Dorsolateral prefrontal cortex (tissue), 120 donors: ENCODE measurements at regions of chr2 and their contacts with region 1.

Region 1: GRCh38 chr2:201118121-201118960 is 2.4 kb downstream of the CFLAR start:
- DNase-seq: peak; percentile 68 to 85 (median 80)
- H3K4me3 ChIP-seq: peak overlapping the region; percentile 42 to 95 (median 84)
- H3K27ac ChIP-seq: peak overlapping the region; percentile 57 to 100 (median 98)
- H3K27me3 ChIP-seq: peaks cover 0 to 4% (median 0%) of the 10 kb centered on the region in 45 donors
- CTCF ChIP-seq: peak in 53 of 56 donors; percentile 24 to 73 (median 52)

Region 2: DNA sequence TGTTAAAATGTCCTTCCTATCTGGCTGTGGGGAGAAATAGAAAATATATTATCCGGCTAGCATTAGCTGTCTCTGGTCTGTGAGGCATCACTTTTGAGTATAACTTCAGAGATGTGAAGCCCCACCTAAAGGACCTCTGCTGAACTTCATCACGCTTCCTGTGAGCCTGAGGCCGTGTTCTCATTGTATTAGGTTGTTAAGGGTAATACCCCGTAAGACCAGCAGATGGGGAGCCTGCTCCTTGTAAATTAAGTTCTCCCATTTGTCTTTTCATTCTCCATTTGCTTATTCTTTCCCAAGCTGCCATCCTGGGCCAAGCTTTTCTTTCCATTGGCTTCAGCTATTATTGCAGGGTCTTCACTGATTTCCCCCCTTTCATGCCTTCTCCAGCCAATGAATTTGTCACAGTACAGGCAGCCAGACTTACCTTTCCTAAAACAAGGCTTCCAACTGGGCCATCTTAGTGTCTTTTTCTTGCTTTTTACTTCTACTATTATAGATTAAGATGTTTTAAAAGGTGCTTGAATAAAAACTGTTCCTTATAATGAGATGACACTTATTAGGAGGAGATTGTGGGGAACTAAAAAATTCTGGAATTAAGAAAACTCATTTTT is 216.8 kb before region 1 on chr2:
- intact Hi-C with region 1: loop called in 1 of 2 experiments (anchors 5 kb)
- DNase-seq: peak in 4 of 10 donors; percentile 9 to 67 (median 26)
- H3K4me3 ChIP-seq: peak overlapping the region in 1 of 59 donors; percentile 5
- H3K27ac ChIP-seq: peak overlapping the region in 5 of 59 donors; percentile 10 to 33 (median 19)
- H3K27me3 ChIP-seq: no peaks in the 10 kb centered on the region
- CTCF ChIP-seq: peak; percentile 23 to 79 (median 70)

Region 3: GRCh38 chr2:200963124-200963917 is 155.0 kb before region 1 on chr2 and contains the start of gene ORC2:
- intact Hi-C with region 1: loop called in 1 of 2 experiments (anchors 5 kb)
- DNase-seq: peak; percentile 81 to 97 (median 94)
- H3K4me3 ChIP-seq: peak within 1 kb of the TSS; percentile 53 to 100 (median 94)
- H3K27ac ChIP-seq: peak within 1 kb of the TSS in 57 of 59 donors; percentile 27 to 90 (median 80)
- H3K27me3 ChIP-seq: no peaks in the 10 kb centered on the region
- CTCF ChIP-seq: peak in 49 of 56 donors; percentile 5 to 61 (median 39)
- total RNA-seq, gene ORC2: 26.1 to 54.8 (median 38.1) TPM

Region 4: GRCh38 chr2:201158111-201158929 is 40.0 kb after region 1 on chr2:
- intact Hi-C with region 1: loop called (anchors 2 to 5 kb)
- DNase-seq: peak in 8 of 10 donors; percentile 29 to 85 (median 62)
- H3K4me3 ChIP-seq: peak overlapping the region in 14 of 59 donors; percentile 0 to 22 (median 12)
- H3K27ac ChIP-seq: peak overlapping the region; percentile 14 to 95 (median 85)
- H3K27me3 ChIP-seq: no peaks in the 10 kb centered on the region
- CTCF ChIP-seq: peak; percentile 35 to 88 (median 76)

Region 5: GRCh38 chr2:201237486-201238123 is 119.3 kb after region 1 on chr2:
- intact Hi-C with region 1: no loop called
- DNase-seq: no peak
- H3K4me3 ChIP-seq: no peak overlapping the region
- H3K27ac ChIP-seq: no peak overlapping the region
- H3K27me3 ChIP-seq: no peaks in the 10 kb centered on the region
- CTCF ChIP-seq: no peak